ENCODE measurements at regions of chr2 and their contacts with region 1.

Region 1: GRCh38 chr2:219959471-219959870 is 332.0 kb downstream of the SLC4A3 start:
- DNase-seq: no peak
- H3K4me3 ChIP-seq: no peak overlapping the region
- H3K27me3 ChIP-seq: no peaks in the 10 kb centered on the region
- CTCF ChIP-seq: no peak

Region 2: DNA sequence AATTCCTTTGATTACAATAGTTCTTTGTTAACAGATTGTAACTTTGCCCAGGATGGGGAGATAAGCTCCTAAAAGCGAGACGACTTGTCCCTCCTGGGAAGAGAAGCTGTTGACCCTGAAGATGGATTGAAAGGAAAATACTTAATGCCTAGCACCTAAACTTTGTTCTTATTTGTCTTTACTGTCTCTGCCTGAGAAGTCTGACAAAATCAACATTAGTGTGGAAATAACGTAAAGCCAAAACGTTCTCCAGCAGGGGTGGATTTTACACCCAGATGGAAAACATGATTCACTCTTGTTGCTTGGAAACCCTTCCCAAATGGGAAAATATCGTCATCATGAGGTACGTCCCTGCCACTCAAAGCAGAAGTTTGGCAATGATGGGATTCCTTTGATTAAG is 118.0 kb after region 1 on chr2:
- CTCF ChIA-PET with region 1: no interaction called
- POLR2A ChIA-PET with region 1: no interaction called
- DNase-seq: peak; percentile 34
- H3K4me3 ChIP-seq: no peak overlapping the region
- H3K27me3 ChIP-seq: no peaks in the 10 kb centered on the region
- CTCF ChIP-seq: no peak

Region 3: GRCh38 chr2:221689140-221689539 is 1729.7 kb after region 1 on chr2:
- CTCF ChIA-PET with region 1: no interaction called
- POLR2A ChIA-PET with region 1: interaction called, 10 read pairs
- DNase-seq: no peak
- H3K4me3 ChIP-seq: no peak overlapping the region
- H3K27me3 ChIP-seq: no peaks in the 10 kb centered on the region
- CTCF ChIP-seq: no peak